H1 (cell line): ENCODE measurements at regions of chr1 and their contacts with region 1.

Region 1: GRCh38 chr1:154863315-154864174 is 6.5 kb downstream of the KCNN3 start:
- DNase-seq: peak in 1 of 2 experiments; percentile 76
- H3K4me3 ChIP-seq: no peak overlapping the region
- H3K27ac ChIP-seq: no peak overlapping the region
- H3K4me1 ChIP-seq: peaks cover 10 to 36% (median 15%) of the 10 kb centered on the region in 4 experiments; a peak in 6 of 7 replicates
- H3K27me3 ChIP-seq: peaks cover 0 to 6% (median 5%) of the 10 kb centered on the region in 4 experiments; a peak in 3 of 7 replicates
- CTCF ChIP-seq: peak; percentile 67 to 86 (median 80)
- EP300 ChIP-seq: no peak
- POLR2A ChIP-seq: no peak
- RAD21 ChIP-seq: peak; percentile 46 to 62

Region 2: GRCh38 chr1:154772606-154773506 is 90.7 kb before region 1 on chr1:
- CTCF ChIA-PET with region 1: interaction called, 17 read pairs
- POLR2A ChIA-PET with region 1: no interaction called
- DNase-seq: peak; percentile 17 to 69
- H3K4me3 ChIP-seq: no peak overlapping the region
- H3K27ac ChIP-seq: no peak overlapping the region
- H3K4me1 ChIP-seq: peaks cover 0 to 11% (median 8%) of the 10 kb centered on the region in 4 experiments; a peak in 6 of 7 replicates
- H3K27me3 ChIP-seq: no peaks in the 10 kb centered on the region
- CTCF ChIP-seq: peak; percentile 55 to 65 (median 60)
- EP300 ChIP-seq: no peak
- POLR2A ChIP-seq: no peak
- RAD21 ChIP-seq: peak; percentile 76 to 82

Region 3: GRCh38 chr1:154802982-154803920 is 60.3 kb before region 1 on chr1:
- CTCF ChIA-PET with region 1: interaction called, 13 read pairs
- POLR2A ChIA-PET with region 1: no interaction called
- DNase-seq: no peak
- H3K4me3 ChIP-seq: no peak overlapping the region
- H3K27ac ChIP-seq: no peak overlapping the region
- H3K4me1 ChIP-seq: peaks cover 0 to 3% (median under 1%) of the 10 kb centered on the region in 4 experiments; a peak in 3 of 7 replicates
- H3K27me3 ChIP-seq: no peaks in the 10 kb centered on the region; a peak in 1 of 7 replicates
- CTCF ChIP-seq: no peak
- EP300 ChIP-seq: no peak
- POLR2A ChIP-seq: no peak
- RAD21 ChIP-seq: no peak

Region 4: GRCh38 chr1:154847891-154848290 is 15.7 kb before region 1 on chr1:
- CTCF ChIA-PET with region 1: interaction called, 80 read pairs
- POLR2A ChIA-PET with region 1: interaction called, 5 read pairs
- DNase-seq: no peak
- H3K4me3 ChIP-seq: no peak overlapping the region
- H3K27ac ChIP-seq: no peak overlapping the region
- H3K4me1 ChIP-seq: peaks cover 3 to 18% (median 8%) of the 10 kb centered on the region in 4 experiments; a peak in 6 of 7 replicates
- H3K27me3 ChIP-seq: no peaks in the 10 kb centered on the region
- CTCF ChIP-seq: no peak
- EP300 ChIP-seq: no peak
- POLR2A ChIP-seq: no peak
- RAD21 ChIP-seq: no peak

Region 5: GRCh38 chr1:154974063-154974807 is 110.7 kb after region 1 on chr1 and contains the start of gene CKS1B:
- CTCF ChIA-PET with region 1: no interaction called
- POLR2A ChIA-PET with region 1: no interaction called
- DNase-seq: peak; percentile 91 to 98
- H3K4me3 ChIP-seq: peak within 1 kb of the TSS; percentile 87 to 99 (median 96)
- H3K27ac ChIP-seq: peak within 1 kb of the TSS; percentile 95
- H3K4me1 ChIP-seq: peaks cover 3 to 13% (median 11%) of the 10 kb centered on the region in 4 experiments; a peak in 6 of 7 replicates
- H3K27me3 ChIP-seq: no peaks in the 10 kb centered on the region
- CTCF ChIP-seq: no peak
- EP300 ChIP-seq: no peak
- POLR2A ChIP-seq: peak; percentile 46 to 82
- RAD21 ChIP-seq: no peak
- total RNA-seq, gene CKS1B: 284 and 294 TPM in 2 replicates